Mammary epithelial cell (primary cell): ENCODE measurements at regions of chr18 and their contacts with region 1.

Region 1: GRCh38 chr18:40283560-40283959 is 1671.5 kb upstream of the PIK3C3 start:
- DNase-seq: no peak
- H3K4me3 ChIP-seq: no peak overlapping the region
- H3K27ac ChIP-seq: no peak overlapping the region
- H3K4me1 ChIP-seq: no peaks in the 10 kb centered on the region
- H3K27me3 ChIP-seq: no peaks in the 10 kb centered on the region
- CTCF ChIP-seq: no peak

Region 2: GRCh38 chr18:40075616-40076015 is 207.9 kb before region 1 on chr18:
- CTCF ChIA-PET with region 1: interaction called, 14 read pairs
- dilution Hi-C with region 1: no loop called
- in situ Hi-C with region 1: no loop called
- intact Hi-C with region 1: no loop called
- DNase-seq: no peak
- H3K4me3 ChIP-seq: no peak overlapping the region
- H3K27ac ChIP-seq: no peak overlapping the region
- H3K4me1 ChIP-seq: no peaks in the 10 kb centered on the region
- H3K27me3 ChIP-seq: no peaks in the 10 kb centered on the region
- CTCF ChIP-seq: no peak